CD4-positive, alpha-beta memory T cell (primary cell): ENCODE measurements at regions of chr1 and their contacts with region 1.

Region 1: GRCh38 chr1:161399257-161399998 is 31.8 kb upstream of the CFAP126 start:
- DNase-seq: peak; percentile 92 to 95 (median 93)
- H3K4me3 ChIP-seq: peak overlapping the region; percentile 49 to 65
- H3K4me3 Mint-ChIP-seq: peak overlapping the region; percentile 94 to 100 (median 97)
- H3K27ac ChIP-seq: peak overlapping the region; percentile 97
- H3K27ac Mint-ChIP-seq: peak overlapping the region; percentile 98 to 100 (median 100)
- H3K4me1 ChIP-seq: peaks cover 23% of the 10 kb centered on the region
- H3K4me1 Mint-ChIP-seq: peaks cover 16 to 42% (median 27%) of the 10 kb centered on the region in 4 donors
- H3K27me3 ChIP-seq: no peaks in the 10 kb centered on the region
- H3K27me3 Mint-ChIP-seq: peaks cover 1 to 8% of the 10 kb centered on the region in 2 donors

Region 2: DNA sequence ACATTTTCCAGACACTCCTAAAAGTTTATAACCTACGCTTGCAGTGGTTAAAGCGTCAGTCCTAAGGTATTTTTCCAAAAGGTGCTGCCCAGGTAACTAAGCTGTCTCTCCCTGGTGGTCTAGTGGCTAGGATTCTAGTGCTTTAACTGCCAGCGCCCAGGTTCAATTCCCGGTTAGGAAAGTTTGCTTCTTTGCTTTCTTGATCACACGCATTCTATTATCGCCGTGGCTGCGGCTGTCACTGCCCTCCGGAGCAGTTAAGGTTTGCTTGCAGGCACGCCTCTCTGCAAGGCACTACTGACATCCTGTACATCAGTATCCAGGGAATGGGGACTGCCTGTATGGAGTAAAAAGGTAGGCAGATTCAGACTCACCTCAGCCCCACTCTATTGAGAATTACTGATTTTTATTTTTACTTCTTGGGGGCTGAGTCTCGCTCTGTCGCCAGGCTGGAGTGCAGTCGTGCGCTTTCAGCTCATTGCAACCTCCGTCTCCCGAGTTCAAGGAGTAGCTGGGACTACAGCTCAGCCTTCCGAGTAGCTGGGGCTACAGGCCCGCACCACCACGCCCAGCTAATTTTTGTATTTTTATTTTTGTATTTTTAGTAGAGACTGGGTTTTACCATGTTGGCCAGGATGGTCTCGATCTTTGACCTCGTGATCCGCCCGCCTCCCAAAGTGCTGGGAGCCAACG is 21.5 kb after region 1 on chr1:
- CTCF ChIA-PET with region 1: no interaction called
- POLR2A ChIA-PET with region 1: interaction called, 8 read pairs
- intact Hi-C with region 1: loop called (anchors 1 kb)
- DNase-seq: no peak
- H3K4me3 ChIP-seq: no peak overlapping the region
- H3K4me3 Mint-ChIP-seq: peak overlapping the region in 2 of 8 donors; percentile 31 to 36
- H3K27ac ChIP-seq: no peak overlapping the region
- H3K27ac Mint-ChIP-seq: no peak overlapping the region
- H3K4me1 ChIP-seq: peaks cover 9% of the 10 kb centered on the region
- H3K4me1 Mint-ChIP-seq: peaks cover 3 to 13% (median 8%) of the 10 kb centered on the region in 4 donors
- H3K27me3 ChIP-seq: no peaks in the 10 kb centered on the region
- H3K27me3 Mint-ChIP-seq: peaks cover 4 to 7% of the 10 kb centered on the region in 2 donors

Region 3: DNA sequence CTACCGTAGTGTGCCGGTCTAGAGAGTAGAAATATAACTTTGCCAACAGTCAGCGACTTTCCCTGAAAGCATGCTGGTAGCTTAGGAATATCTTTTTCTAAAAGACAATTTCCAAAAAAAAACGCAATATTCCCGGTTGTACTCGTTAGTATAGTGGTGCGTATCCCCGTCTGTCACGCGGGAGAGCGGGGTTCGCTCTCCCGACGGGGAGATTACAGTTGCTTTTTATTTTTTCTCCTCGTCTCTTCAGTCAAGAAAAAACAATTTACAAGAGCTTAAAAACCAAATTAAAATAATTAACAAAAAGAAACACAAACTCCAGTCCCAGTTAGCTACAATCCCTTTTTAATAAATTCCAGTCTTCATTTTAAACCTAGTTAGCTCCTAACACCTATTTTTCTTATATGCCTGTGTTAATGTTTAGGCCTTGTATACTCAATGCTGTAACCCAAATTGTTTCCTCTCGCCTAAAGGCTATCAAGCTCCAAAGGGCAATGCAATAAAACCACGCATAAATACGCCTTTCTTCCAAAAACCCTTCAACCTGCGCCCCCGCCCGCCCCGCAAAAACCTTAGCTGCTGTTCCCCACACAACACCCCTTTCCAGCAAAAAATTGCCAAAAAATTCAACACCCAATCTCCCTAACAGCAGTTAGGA is 132.7 kb after region 1 on chr1:
- CTCF ChIA-PET with region 1: no interaction called
- POLR2A ChIA-PET with region 1: no interaction called
- intact Hi-C with region 1: loop called (anchors 10 kb)
- DNase-seq: no peak
- H3K4me3 ChIP-seq: no peak overlapping the region
- H3K4me3 Mint-ChIP-seq: peak overlapping the region in 4 of 8 donors; percentile 51 to 58 (median 54)
- H3K27ac ChIP-seq: no peak overlapping the region
- H3K27ac Mint-ChIP-seq: peak overlapping the region in 1 of 7 donors; percentile 78
- H3K4me1 ChIP-seq: peaks cover 10% of the 10 kb centered on the region
- H3K4me1 Mint-ChIP-seq: peaks cover 2 to 25% (median 9%) of the 10 kb centered on the region in 4 donors
- H3K27me3 ChIP-seq: no peaks in the 10 kb centered on the region
- H3K27me3 Mint-ChIP-seq: peaks cover 0 to 15% of the 10 kb centered on the region in 2 donors